ENCODE measurements at regions of chr2 and their contacts with region 1.

Region 1: DNA sequence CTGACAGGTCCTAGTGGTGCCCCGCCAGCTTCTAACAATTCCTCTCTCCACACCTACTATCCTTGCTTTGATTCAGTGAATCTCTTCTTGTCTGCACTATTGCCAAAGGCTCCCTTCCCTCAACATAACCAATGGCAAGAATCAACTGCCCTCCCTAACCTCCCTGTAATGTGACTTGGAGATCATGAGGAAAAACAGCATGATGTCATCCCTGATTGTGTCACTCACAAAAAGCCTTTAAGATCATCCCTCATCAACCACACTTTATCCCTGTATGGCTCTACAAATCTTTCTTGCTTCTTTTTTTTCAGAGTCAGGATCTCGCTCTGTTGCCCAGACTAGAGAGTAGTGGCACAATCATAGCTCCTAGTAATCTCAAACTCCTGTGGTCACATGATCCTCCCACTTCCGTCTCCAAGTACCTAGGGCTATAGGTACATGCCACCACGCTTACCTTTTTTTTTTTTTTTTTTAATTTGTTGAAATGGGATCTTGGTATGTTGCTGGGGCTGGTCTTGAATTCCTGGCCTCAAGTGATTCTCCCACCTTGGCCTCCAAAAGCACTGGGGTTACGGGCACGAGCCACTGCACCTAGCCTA is 19.7 kb downstream of the SAP130 start:
- DNase-seq: no peak
- ATAC-seq: no peak
- H3K4me3 ChIP-seq: no peak overlapping the region
- H3K4me3 Mint-ChIP-seq: no peak overlapping the region
- H3K27ac ChIP-seq: no peak overlapping the region
- H3K27ac Mint-ChIP-seq: no peak overlapping the region
- H3K4me1 ChIP-seq: no peaks in the 10 kb centered on the region
- H3K4me1 Mint-ChIP-seq: no peaks in the 10 kb centered on the region
- H3K27me3 ChIP-seq: no peaks in the 10 kb centered on the region
- H3K27me3 Mint-ChIP-seq: no peaks in the 10 kb centered on the region

Region 2: GRCh38 chr2:127884436-127885345 is 123.5 kb before region 1 on chr2:
- CTCF ChIA-PET with region 1: no interaction called
- POLR2A ChIA-PET with region 1: no interaction called
- DNase-seq: no peak
- ATAC-seq: no peak
- H3K4me3 ChIP-seq: peak overlapping the region; percentile 23 to 27
- H3K4me3 Mint-ChIP-seq: peak overlapping the region; percentile 83 to 91 (median 88)
- H3K27ac ChIP-seq: no peak overlapping the region
- H3K27ac Mint-ChIP-seq: peak overlapping the region; percentile 43 to 80
- H3K4me1 ChIP-seq: peaks cover 18 to 20% of the 10 kb centered on the region in 2 experiments
- H3K4me1 Mint-ChIP-seq: peaks cover 56 to 70% (median 63%) of the 10 kb centered on the region in 3 donors
- H3K27me3 ChIP-seq: no peaks in the 10 kb centered on the region
- H3K27me3 Mint-ChIP-seq: no peaks in the 10 kb centered on the region

Region 3: GRCh38 chr2:128076461-128077106 is 68.4 kb after region 1 on chr2:
- CTCF ChIA-PET with region 1: no interaction called
- POLR2A ChIA-PET with region 1: interaction called in 1 of 2 experiments, 11 read pairs
- DNase-seq: no peak
- ATAC-seq: no peak
- H3K4me3 ChIP-seq: no peak overlapping the region
- H3K4me3 Mint-ChIP-seq: no peak overlapping the region
- H3K27ac ChIP-seq: no peak overlapping the region
- H3K27ac Mint-ChIP-seq: no peak overlapping the region
- H3K4me1 ChIP-seq: no peaks in the 10 kb centered on the region
- H3K4me1 Mint-ChIP-seq: no peaks in the 10 kb centered on the region
- H3K27me3 ChIP-seq: peaks cover 0 to 8% of the 10 kb centered on the region in 2 experiments
- H3K27me3 Mint-ChIP-seq: peaks cover 3% of the 10 kb centered on the region in 2 donors

Region 4: DNA sequence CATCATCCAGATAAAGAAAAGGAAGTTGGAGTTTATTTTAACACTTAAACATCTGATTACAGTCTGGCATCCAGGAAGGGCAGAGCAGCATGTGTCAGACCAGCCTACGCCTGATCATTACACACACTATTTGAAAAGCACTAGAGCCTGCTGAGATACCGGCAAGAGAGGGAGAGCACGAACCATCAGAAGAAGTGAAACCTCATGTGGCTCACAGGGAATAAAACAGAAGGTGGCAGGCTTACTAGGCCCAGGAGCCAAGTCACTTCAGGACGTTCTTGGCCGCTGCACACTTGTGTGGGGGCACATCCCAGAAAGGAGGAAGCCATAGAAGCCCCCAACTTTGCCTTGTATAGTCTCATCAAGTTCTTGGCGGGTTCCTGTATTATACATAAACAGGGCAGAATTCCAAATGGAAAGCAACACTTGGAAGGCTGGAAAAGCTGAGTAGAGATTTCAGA is 188.3 kb after region 1 on chr2:
- CTCF ChIA-PET with region 1: no interaction called
- POLR2A ChIA-PET with region 1: interaction called in 1 of 2 experiments, 11 read pairs
- DNase-seq: no peak
- ATAC-seq: peak in 2 of 4 experiments; percentile 28 to 43
- H3K4me3 ChIP-seq: no peak overlapping the region
- H3K4me3 Mint-ChIP-seq: peak overlapping the region in 1 of 3 donors; percentile 62
- H3K27ac ChIP-seq: no peak overlapping the region
- H3K27ac Mint-ChIP-seq: peak overlapping the region; percentile 56 to 92
- H3K4me1 ChIP-seq: peaks cover 0 to 21% of the 10 kb centered on the region in 2 experiments
- H3K4me1 Mint-ChIP-seq: peaks cover 31 to 40% (median 33%) of the 10 kb centered on the region in 3 donors
- H3K27me3 ChIP-seq: no peaks in the 10 kb centered on the region
- H3K27me3 Mint-ChIP-seq: no peaks in the 10 kb centered on the region